Left ventricle myocardium superior (tissue), 1 donor: ENCODE measurements at regions of chr1 and their contacts with region 1.

Region 1: GRCh38 chr1:114979278-114979891 is 50.2 kb upstream of the TSHB start:
- DNase-seq: peak; percentile 30
- ATAC-seq: no peak

Region 2: DNA sequence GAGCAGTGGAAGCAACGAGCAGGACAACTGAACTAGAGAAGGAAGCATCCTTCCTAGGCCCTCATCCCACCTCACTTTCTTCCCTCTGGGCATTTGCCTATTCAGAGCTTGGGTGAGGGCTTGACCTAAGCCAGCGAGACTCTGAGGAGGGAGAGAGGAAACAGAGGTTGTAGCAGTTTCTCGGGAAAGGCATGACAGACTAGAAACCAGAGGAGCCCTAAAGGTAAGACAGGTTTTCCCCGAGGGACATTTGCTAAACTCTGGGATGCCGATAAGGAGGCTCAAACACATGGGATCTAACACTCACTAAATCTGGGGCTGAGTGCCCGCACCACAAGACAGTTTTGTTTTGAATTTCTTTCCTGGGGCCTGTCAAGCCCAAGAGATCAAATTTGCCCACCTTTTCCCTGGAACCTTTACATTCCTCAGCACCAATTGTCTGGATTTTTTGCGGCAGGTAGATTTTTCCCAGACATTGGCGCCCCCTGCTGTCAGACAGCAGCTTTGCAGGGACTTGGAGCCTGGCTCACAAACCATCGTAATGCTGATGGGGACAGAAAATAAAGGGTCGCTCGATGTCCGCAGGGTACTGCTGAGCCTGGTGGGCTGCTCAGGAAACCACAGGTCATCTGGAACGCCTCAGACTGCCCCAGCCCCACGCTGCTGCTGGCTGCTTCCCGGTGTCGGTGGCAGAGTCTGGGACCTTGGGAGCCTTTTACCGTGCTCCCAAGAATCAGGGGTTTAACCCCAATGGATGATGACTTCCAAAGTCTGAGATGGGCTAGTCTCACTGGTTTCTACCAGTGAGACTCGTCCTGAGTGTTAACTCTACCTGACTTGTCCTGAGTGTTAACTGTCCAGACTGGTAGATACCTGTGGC is 133.4 kb after region 1 on chr1:
- intact Hi-C with region 1: loop called (anchors 2 kb)
- DNase-seq: peak; percentile 49
- ATAC-seq: peak; percentile 45

Region 3: GRCh38 chr1:115595279-115596079 is 616.1 kb after region 1 on chr1:
- intact Hi-C with region 1: loop called (anchors 10 kb)
- DNase-seq: peak; percentile 92
- ATAC-seq: peak; percentile 90